Aorta (tissue), 5 donors: ENCODE measurements at regions of chr1 and their contacts with region 1.

Region 1: DNA sequence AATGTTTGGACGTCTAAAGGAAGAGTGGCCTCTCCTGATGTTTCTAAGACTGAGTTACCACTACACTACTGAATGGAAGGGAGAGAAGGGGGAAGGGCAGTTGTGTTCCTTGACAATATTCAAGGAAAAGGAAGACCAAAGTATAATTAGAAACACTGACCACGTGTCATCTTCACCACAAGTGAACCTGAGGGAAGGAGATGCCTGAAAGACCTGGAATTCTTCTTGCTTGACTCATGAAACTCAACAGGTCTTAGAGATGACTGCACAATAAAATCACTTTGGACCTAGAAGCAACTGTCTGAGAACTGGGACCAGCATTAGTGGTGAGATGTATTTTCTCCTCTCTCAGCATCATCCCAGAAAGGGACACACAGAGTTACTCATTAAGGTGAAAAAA is 56.7 kb downstream of the PTPN14 start:
- DNase-seq: no peak
- ATAC-seq: no peak
- H3K4me3 ChIP-seq: no peak overlapping the region
- H3K27ac ChIP-seq: no peak overlapping the region
- H3K4me1 ChIP-seq: peaks cover 5 to 6% of the 10 kb centered on the region in 2 donors
- H3K27me3 ChIP-seq: no peaks in the 10 kb centered on the region

Region 2: GRCh38 chr1:214174508-214175199 is 320.1 kb before region 1 on chr1:
- intact Hi-C with region 1: no loop called
- DNase-seq: no peak
- ATAC-seq: no peak
- H3K4me3 ChIP-seq: no peak overlapping the region
- H3K27ac ChIP-seq: no peak overlapping the region
- H3K4me1 ChIP-seq: no peaks in the 10 kb centered on the region
- H3K27me3 ChIP-seq: no peaks in the 10 kb centered on the region

Region 3: DNA sequence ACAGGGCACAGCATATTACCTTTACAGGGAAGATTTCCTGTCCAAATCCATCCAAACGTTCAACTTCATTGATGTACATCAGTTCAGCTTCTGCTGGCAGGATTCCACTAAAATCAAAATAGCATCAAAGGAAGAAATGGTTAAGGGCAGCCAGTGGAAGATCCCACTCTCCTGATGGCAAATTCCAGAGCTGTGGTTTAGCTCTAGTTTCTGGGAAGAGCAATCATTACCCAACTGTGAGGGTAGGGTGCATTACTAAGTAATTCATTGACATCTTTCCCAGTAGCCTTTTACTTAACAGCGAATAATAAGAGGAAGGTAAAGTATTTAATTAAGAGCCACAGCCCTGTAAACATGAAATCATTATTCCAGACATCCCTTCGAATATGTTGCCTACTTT is 93.0 kb before region 1 on chr1:
- intact Hi-C with region 1: no loop called
- DNase-seq: no peak
- ATAC-seq: no peak
- H3K4me3 ChIP-seq: no peak overlapping the region
- H3K27ac ChIP-seq: no peak overlapping the region
- H3K4me1 ChIP-seq: peaks cover 0 to 2% of the 10 kb centered on the region in 2 donors
- H3K27me3 ChIP-seq: no peaks in the 10 kb centered on the region

Region 4: DNA sequence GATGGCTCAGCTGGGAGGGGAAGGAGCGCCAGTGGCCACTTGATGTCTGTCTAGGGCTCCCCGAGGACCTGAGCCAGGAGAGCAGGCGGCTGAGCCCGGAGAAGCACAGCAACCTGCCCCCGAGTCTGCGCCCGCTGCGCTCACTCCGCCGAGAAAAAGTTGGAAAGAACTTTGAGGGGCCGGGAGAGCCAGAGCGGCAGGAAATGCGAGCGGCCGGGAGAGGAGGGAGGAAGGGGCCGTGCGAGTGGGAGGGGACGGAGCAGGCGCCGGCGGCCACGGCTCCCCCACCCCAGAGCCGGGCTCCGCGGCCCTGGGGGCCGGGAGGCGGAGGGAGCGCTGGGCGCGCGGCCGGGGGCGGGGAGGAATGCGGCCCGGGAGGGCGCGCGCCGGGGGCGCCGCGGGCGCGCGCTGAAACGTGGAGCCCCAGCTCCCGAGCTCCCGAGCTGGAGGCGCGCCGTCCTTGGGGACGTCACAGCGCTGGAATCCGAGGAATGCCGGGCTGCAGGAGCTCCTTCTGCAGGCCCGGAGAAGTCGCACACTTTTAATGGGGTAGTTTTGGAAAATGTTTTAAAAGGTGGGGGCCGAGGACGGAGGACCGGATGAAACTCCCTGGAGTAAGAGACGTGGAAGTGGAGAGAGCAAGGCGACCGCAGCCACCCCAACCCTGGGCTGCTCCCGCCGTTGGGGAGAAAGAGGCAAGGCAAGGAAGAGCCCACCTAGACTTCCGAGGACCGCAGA is 56.9 kb after region 1 on chr1 and contains the start of gene PTPN14:
- intact Hi-C with region 1: loop called in 1 of 2 experiments (anchors 5 kb)
- DNase-seq: peak; percentile 89 to 96
- ATAC-seq: peak; percentile 92
- H3K4me3 ChIP-seq: peak within 1 kb of the TSS; percentile 69 to 80
- H3K27ac ChIP-seq: peak within 1 kb of the TSS; percentile 94 to 98
- H3K4me1 ChIP-seq: no peaks in the 10 kb centered on the region
- H3K27me3 ChIP-seq: no peaks in the 10 kb centered on the region
- total RNA-seq, gene PTPN14: 48.3 to 50.5 TPM